Breast epithelium (tissue), 4 donors: ENCODE measurements at regions of chr3 and their contacts with region 1.

Region 1: DNA sequence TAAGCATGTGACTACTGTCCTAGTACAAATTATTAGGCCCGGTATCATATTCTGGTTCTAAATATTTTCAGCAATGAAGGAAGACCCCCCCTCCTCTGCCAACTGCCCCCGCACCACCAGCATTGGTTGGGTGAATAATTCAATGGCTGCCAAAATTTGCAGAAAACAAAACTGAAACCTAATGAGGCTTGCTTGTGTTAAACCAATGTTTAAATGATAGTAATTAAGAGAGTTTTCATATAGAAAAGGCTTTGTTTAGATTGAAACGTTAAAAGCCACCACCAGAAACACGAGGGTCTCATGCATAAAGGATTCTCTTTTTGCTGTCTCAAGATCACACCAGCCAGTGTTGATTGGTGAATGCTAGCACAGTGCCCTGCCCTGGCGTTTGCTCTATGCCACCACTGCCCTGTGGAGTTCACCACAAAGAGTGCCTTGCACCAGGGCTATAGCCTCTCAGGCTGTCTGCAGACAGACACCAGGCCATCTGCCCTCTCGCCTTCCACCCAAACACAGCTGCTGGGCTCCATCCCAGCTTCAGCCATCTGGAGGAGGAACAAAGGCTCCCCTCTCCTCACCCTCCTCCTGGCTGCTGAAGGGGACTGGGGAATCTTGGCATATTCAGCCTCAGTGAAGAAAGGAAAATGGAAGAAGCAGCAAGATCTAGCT is 200.3 kb upstream of the PFN2 start:
- DNase-seq: no peak
- H3K4me3 ChIP-seq: no peak overlapping the region
- H3K27ac ChIP-seq: no peak overlapping the region
- H3K4me1 ChIP-seq: no peaks in the 10 kb centered on the region
- H3K27me3 ChIP-seq: no peaks in the 10 kb centered on the region
- CTCF ChIP-seq: no peak
- POLR2A ChIP-seq: no peak

Region 2: GRCh38 chr3:150130404-150131100 is 40.4 kb before region 1 on chr3:
- intact Hi-C with region 1: no loop called
- DNase-seq: no peak
- H3K4me3 ChIP-seq: no peak overlapping the region
- H3K27ac ChIP-seq: no peak overlapping the region
- H3K4me1 ChIP-seq: no peaks in the 10 kb centered on the region
- H3K27me3 ChIP-seq: no peaks in the 10 kb centered on the region
- CTCF ChIP-seq: no peak
- POLR2A ChIP-seq: no peak

Region 3: GRCh38 chr3:150140614-150141321 is 30.2 kb before region 1 on chr3:
- intact Hi-C with region 1: loop called (anchors 1 kb)
- DNase-seq: no peak
- H3K4me3 ChIP-seq: no peak overlapping the region
- H3K27ac ChIP-seq: no peak overlapping the region
- H3K4me1 ChIP-seq: no peaks in the 10 kb centered on the region
- H3K27me3 ChIP-seq: no peaks in the 10 kb centered on the region
- CTCF ChIP-seq: no peak
- POLR2A ChIP-seq: no peak